ENCODE measurements at regions of chrX and their contacts with region 1.

Region 1: DNA sequence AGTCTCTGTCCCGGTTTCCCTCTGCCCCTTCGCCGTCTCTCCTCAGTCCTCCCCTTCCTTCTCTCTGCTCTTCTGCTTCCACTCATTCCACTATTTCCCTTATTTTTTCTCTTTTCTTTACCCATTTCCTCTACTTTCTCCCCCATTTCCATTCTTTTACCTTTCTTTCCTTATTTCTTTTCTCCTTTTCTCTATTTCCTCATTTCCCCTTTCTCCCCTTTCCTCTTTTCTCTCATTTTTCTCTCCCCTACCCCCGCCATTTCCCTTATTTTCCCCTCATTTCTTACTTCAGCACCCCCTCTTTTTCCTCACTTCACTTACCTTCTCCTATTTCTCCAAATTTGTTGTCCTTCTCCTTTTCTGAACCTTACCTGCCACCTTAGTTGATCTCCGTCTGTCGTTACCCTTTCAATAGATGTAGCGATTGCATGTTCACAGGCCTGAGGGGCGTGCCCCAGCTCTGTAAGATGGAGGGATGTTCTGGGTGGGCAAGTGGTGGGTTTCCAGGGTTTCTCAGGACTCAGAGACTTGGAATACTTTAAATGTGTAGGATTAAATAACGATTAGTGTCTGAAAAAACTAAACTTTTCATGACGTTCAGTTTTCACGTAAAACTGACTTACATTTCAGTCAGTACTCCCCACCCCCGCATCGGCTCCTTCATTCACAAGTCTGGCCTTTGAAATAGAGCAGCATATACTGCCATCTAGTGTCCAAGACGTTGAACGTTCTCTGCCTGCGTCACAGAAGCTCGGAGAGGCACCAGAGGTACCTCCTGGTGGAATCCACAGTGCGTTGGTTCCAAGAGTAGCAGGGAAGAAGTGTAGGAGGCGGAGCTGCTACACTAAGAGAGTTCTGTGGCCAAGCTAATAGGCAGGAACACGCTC is 641 bp upstream of the NCBP2L start:
- DNase-seq: peak; percentile 53 to 84 (median 78)
- H3K4me3 ChIP-seq: peak overlapping the region; percentile 73
- H3K4me3 Mint-ChIP-seq: peak overlapping the region; percentile 87 to 94 (median 90)
- H3K27ac ChIP-seq: peak overlapping the region; percentile 43
- H3K27ac Mint-ChIP-seq: peak overlapping the region; percentile 68 to 98 (median 89)
- H3K4me1 ChIP-seq: no peaks in the 10 kb centered on the region
- H3K4me1 Mint-ChIP-seq: peaks cover 12 to 27% (median 18%) of the 10 kb centered on the region in 3 donors
- H3K27me3 ChIP-seq: no peaks in the 10 kb centered on the region
- H3K27me3 Mint-ChIP-seq: peaks cover 0 to 17% of the 10 kb centered on the region in 2 donors

Region 2: GRCh38 chrX:107654872-107655761 is 121.8 kb before region 1 on chrX:
- CTCF ChIA-PET with region 1: interaction called, 145 read pairs
- POLR2A ChIA-PET with region 1: interaction called, 4 read pairs
- DNase-seq: peak; percentile 49 to 77 (median 57)
- H3K4me3 ChIP-seq: no peak overlapping the region
- H3K4me3 Mint-ChIP-seq: no peak overlapping the region
- H3K27ac ChIP-seq: no peak overlapping the region
- H3K27ac Mint-ChIP-seq: peak overlapping the region in 3 of 8 donors; percentile 19 to 69 (median 43)
- H3K4me1 ChIP-seq: peaks cover 5% of the 10 kb centered on the region
- H3K4me1 Mint-ChIP-seq: peaks cover 0 to 17% (median 17%) of the 10 kb centered on the region in 3 donors
- H3K27me3 ChIP-seq: no peaks in the 10 kb centered on the region
- H3K27me3 Mint-ChIP-seq: peaks cover 0 to 7% of the 10 kb centered on the region in 2 donors

Region 3: DNA sequence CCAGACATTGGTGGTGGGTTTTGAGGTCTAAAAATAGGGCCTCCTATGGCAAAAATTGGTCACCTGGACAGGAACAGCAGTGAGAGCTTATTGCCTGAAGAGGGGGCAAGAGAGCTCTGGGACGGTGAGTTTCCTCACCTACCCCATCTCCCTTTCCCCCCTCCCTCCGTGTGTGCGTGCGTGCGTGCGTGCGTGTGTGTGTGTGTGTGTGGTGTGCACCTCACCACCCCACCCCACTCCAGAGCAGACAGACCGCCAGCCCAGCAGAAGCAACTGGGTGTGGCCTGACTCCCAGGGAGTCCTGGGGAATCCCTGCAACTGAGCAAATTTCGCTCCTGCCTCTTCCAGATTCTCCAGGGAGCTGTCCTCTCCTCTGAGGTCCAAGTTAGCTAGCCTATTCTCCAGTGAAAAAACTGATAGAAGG is 103.9 kb before region 1 on chrX:
- CTCF ChIA-PET with region 1: interaction called, 59 read pairs
- POLR2A ChIA-PET with region 1: interaction called, 26 read pairs
- DNase-seq: peak; percentile 61 to 91 (median 90)
- H3K4me3 ChIP-seq: peak overlapping the region; percentile 66
- H3K4me3 Mint-ChIP-seq: peak overlapping the region; percentile 81 to 87 (median 84)
- H3K27ac ChIP-seq: peak overlapping the region; percentile 99
- H3K27ac Mint-ChIP-seq: peak overlapping the region; percentile 99 to 100 (median 100)
- H3K4me1 ChIP-seq: peaks cover 45% of the 10 kb centered on the region
- H3K4me1 Mint-ChIP-seq: peaks cover 48 to 63% (median 59%) of the 10 kb centered on the region in 3 donors
- H3K27me3 ChIP-seq: no peaks in the 10 kb centered on the region
- H3K27me3 Mint-ChIP-seq: peaks cover 0 to 14% of the 10 kb centered on the region in 2 donors

Region 4: DNA sequence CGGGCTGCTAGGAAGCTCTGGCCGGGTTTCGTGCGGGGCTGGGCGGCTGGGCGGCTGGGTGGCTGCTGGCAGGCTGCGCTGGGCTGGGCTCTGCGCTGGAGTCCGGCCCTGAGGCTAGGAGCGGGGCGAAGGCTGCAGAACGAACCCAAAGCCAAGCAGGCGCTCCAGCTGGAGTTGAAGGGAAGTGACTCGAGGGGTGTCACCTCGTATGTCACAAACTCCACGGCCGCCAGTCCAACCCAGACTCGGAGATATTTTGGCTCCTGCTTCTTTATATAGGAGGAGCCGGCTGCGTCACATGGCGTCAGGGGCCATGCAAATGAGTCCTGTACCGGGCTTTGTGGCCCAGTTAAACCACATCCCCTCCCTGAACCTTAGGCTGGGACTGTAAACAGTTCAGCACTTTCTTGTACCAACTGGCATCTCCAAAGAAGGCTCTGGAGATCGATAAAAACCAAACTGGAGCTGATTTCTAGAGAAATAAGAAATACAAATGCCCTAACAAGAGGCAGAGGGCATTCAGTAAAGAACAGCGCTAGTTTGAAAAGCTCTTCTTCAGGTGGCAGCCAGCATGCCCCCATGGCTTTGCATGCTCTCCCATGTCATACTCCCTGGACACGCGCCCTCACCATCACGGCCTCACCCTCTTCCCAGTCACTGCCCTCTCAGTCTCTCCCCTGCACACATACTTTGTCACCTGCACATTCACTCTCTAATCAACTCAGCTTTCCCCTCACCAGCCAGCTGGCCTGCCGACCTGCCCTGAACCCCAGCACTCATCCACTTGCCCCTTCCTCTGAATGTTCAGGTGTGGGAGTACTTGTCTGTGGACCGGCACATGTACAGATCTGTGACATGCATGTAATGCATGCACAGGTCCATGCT is 59.8 kb before region 1 on chrX:
- CTCF ChIA-PET with region 1: interaction called, 39 read pairs
- POLR2A ChIA-PET with region 1: interaction called, 22 read pairs
- DNase-seq: peak; percentile 78 to 96 (median 93)
- H3K4me3 ChIP-seq: peak overlapping the region; percentile 77
- H3K4me3 Mint-ChIP-seq: peak overlapping the region; percentile 92 to 100 (median 94)
- H3K27ac ChIP-seq: peak overlapping the region; percentile 99
- H3K27ac Mint-ChIP-seq: peak overlapping the region; percentile 96 to 100 (median 98)
- H3K4me1 ChIP-seq: peaks cover 44% of the 10 kb centered on the region
- H3K4me1 Mint-ChIP-seq: peaks cover 48 to 56% (median 54%) of the 10 kb centered on the region in 3 donors
- H3K27me3 ChIP-seq: no peaks in the 10 kb centered on the region
- H3K27me3 Mint-ChIP-seq: peaks cover 0 to 44% of the 10 kb centered on the region in 2 donors

Region 5: GRCh38 chrX:107741404-107741790 is 35.5 kb before region 1 on chrX:
- CTCF ChIA-PET with region 1: interaction called, 30 read pairs
- POLR2A ChIA-PET with region 1: interaction called, 14 read pairs
- DNase-seq: no peak
- H3K4me3 ChIP-seq: peak overlapping the region; percentile 51
- H3K4me3 Mint-ChIP-seq: peak overlapping the region; percentile 78 to 88 (median 83)
- H3K27ac ChIP-seq: peak overlapping the region; percentile 61
- H3K27ac Mint-ChIP-seq: peak overlapping the region; percentile 92 to 99 (median 96)
- H3K4me1 ChIP-seq: peaks cover 44% of the 10 kb centered on the region
- H3K4me1 Mint-ChIP-seq: peaks cover 38 to 54% (median 42%) of the 10 kb centered on the region in 3 donors
- H3K27me3 ChIP-seq: no peaks in the 10 kb centered on the region
- H3K27me3 Mint-ChIP-seq: peaks cover 0 to 5% of the 10 kb centered on the region in 2 donors

Region 6: DNA sequence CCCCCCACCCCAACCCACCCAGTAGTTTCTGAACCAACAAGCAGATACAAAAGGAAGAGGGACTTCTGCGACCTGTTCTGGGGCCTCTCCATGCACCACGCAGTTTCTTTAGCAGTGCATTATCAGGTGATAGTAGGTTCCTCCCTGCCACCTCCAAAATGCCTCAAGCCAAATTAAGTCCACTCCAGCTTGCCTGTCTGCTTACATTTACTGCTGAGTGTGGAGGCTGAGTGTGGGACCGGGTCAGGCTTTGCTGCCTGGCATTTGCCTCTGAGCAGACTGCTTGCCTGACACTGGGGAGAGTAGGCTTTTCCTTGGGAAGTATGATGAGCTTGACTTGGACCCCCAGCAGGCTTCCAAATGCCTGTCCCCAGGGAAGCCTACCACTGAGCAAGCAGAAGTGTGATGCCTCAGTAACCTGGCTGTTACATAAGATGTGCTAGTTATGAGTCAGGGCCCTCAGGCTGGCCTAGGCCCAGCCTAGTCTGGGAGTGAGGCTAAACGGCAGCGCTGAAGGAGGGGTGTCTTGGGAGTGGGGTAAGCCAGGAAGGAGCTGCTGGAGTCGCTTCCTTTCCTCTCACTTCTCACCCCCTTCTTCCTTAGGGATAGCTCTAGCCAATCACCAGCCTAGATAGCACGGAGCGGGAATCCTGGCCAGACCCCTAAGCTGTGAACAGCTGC is 10.3 kb before region 1 on chrX:
- CTCF ChIA-PET with region 1: interaction called, 10 read pairs
- POLR2A ChIA-PET with region 1: no interaction called
- DNase-seq: no peak
- H3K4me3 ChIP-seq: no peak overlapping the region
- H3K4me3 Mint-ChIP-seq: no peak overlapping the region
- H3K27ac ChIP-seq: no peak overlapping the region
- H3K27ac Mint-ChIP-seq: peak overlapping the region in 1 of 8 donors; percentile 47
- H3K4me1 ChIP-seq: no peaks in the 10 kb centered on the region
- H3K4me1 Mint-ChIP-seq: peaks cover 0 to 22% (median 0%) of the 10 kb centered on the region in 3 donors
- H3K27me3 ChIP-seq: no peaks in the 10 kb centered on the region
- H3K27me3 Mint-ChIP-seq: peaks cover 0 to 7% of the 10 kb centered on the region in 2 donors

Measured in CD8-positive, alpha-beta memory T cell (primary cell).